SK-N-SH (cell line): ENCODE measurements at regions of chr2 and their contacts with region 1.

Region 1: DNA sequence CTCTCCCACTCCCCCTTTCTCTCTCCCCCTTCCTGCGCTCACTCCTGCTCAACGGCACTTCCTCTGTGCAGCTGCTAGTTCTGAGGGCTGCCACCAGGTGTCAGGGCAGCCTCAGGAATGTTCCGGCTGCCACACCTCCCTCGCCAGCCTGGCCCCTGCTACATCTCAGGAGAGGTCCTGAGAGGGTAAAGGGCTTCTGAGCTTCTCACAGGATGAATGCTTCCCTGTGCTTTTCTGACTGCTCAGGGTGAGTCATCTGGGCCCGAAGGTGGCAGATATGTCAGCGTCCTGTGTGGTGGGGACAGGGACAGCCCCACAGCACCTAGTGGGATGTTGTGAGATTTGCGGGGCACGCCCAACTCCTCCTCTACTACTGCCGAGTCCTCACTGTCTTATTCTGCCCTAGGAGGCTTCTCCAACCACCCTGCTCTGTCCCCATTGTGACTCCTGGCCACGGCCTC is 49.0 kb downstream of the PLEKHB2 start:
- DNase-seq: peak; percentile 92
- H3K4me3 ChIP-seq: no peak overlapping the region; a peak in 1 of 4 replicates
- H3K27ac ChIP-seq: no peak overlapping the region
- H3K4me1 ChIP-seq: no peaks in the 10 kb centered on the region; a peak in 1 of 4 replicates
- H3K27me3 ChIP-seq: no peaks in the 10 kb centered on the region
- CTCF ChIP-seq: peak; percentile 87
- EP300 ChIP-seq: no peak
- RAD21 ChIP-seq: peak; percentile 97

Region 2: DNA sequence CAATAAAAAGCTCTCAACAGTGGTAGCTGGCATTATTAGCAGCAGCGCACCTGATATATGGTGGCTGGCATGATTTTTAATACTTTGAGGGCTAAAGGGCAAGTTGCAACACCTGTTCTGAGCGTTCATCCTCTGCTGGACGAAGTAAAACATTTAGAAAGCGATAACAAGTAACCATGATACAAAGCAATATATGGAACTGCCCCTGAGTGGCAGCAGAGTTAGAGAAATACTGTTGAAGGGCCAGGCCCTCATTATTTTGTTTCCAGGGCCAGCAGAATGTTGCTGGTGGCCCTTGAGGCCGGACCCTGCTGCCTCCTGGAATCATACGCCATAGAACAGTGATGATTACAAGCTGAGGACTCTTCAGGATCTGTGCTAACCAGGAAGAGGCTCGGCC is 269.6 kb before region 1 on chr2:
- CTCF ChIA-PET with region 1: no interaction called
- POLR2A ChIA-PET with region 1: no interaction called
- DNase-seq: no peak
- H3K4me3 ChIP-seq: no peak overlapping the region
- H3K27ac ChIP-seq: no peak overlapping the region; a peak in 1 of 4 replicates
- H3K4me1 ChIP-seq: peaks cover 0 to 17% of the 10 kb centered on the region in 2 experiments; a peak in 2 of 4 replicates
- H3K27me3 ChIP-seq: no peaks in the 10 kb centered on the region; the same call in 1 of the 2 replicates
- CTCF ChIP-seq: no peak
- EP300 ChIP-seq: no peak
- RAD21 ChIP-seq: peak; percentile 42

Region 3: DNA sequence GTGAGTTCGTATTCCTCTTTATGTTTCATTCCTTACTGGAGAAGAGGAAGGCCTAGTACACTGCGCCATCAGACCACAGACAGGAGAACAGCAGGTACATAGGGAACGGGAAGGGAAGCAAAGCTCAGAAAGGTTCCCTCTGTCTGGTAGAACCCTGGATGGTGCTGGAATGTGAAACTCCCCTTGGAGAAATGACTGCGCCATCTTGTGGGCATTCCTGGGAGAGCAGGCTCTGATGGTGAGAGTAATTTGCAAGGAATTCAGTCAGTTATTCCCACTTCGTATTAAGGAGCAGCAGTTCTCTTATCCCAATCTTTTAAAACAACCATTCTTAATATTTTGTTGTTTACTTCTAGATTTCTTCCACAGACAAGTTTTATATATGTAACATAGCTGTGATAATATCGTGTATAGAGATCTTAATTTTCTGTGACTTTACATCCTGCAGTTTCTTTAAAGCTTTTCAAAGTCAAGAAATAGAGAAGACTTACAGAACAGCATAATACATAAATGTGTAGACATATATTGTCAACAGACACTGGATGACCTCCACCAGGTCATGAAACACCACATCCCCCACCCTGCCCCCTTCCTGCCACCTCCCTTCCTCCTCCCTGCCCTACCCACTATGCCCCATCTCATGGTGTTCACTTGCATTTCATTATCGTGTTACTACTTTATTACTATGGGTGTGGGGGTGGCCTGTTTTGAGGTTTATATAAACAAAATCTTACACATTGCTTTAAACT is 233.5 kb before region 1 on chr2:
- CTCF ChIA-PET with region 1: no interaction called
- POLR2A ChIA-PET with region 1: no interaction called
- DNase-seq: peak; percentile 87
- H3K4me3 ChIP-seq: peak overlapping the region in 1 of 2 experiments; percentile 23; a peak in 1 of 4 replicates
- H3K27ac ChIP-seq: no peak overlapping the region
- H3K4me1 ChIP-seq: no peaks in the 10 kb centered on the region
- H3K27me3 ChIP-seq: no peaks in the 10 kb centered on the region
- CTCF ChIP-seq: peak; percentile 89
- EP300 ChIP-seq: no peak
- RAD21 ChIP-seq: peak; percentile 79

Region 4: DNA sequence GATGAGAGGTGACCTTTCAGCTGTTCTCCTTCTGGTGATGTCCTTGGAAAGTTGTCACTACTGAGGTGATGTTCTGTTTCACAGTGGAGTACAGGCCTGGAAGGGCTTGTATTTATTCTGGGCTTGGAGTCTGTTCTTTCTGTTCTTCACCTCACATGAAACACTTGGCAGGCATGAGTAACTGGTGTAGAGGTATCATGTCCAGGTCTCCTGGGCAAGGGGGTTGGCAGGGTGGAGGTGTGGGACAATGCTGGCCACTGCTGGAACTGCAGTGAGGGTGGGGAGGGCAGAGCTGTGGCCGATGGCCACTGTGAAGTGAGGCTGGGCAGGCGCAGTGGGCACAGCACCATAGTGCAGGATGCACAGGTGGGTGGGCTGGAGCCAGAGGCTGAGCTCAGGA is 13.5 kb before region 1 on chr2:
- CTCF ChIA-PET with region 1: interaction called, 12 read pairs
- POLR2A ChIA-PET with region 1: no interaction called
- DNase-seq: no peak
- H3K4me3 ChIP-seq: no peak overlapping the region
- H3K27ac ChIP-seq: no peak overlapping the region
- H3K4me1 ChIP-seq: no peaks in the 10 kb centered on the region
- H3K27me3 ChIP-seq: no peaks in the 10 kb centered on the region
- CTCF ChIP-seq: no peak
- EP300 ChIP-seq: no peak
- RAD21 ChIP-seq: no peak

Region 5: DNA sequence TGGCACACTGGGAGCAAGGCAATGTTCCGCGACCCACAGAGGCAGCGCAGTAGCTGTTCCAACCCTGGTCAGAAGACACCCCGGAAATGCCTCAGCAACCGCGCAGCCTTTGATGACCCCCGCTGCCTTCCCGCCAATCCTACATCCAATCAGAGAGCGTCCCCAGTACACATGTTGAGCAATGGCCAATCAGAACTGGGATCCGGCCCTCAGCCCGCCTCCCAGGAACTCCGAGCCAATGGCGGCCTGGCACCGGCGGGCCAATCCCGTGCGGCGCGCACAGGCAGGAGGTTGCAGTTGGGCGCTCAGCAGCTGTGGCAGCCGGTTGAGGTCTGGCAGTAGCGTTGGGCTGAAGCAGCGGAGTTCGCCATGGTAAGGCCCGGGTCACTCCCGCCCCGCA is 321.7 kb after region 1 on chr2 and contains the start of gene TUBA3D:
- CTCF ChIA-PET with region 1: no interaction called
- POLR2A ChIA-PET with region 1: no interaction called
- DNase-seq: no peak
- H3K4me3 ChIP-seq: no peak within 1 kb of the TSS
- H3K27ac ChIP-seq: no peak within 1 kb of the TSS
- H3K4me1 ChIP-seq: no peaks in the 10 kb centered on the region
- H3K27me3 ChIP-seq: no peaks in the 10 kb centered on the region
- CTCF ChIP-seq: no peak
- EP300 ChIP-seq: no peak
- RAD21 ChIP-seq: no peak
- polyA plus RNA-seq, gene TUBA3D: not detected in 2 replicates